ENCODE measurements at regions of chr14 and their contacts with region 1.

Region 1: GRCh38 chr14:73049428-73049827 is 8.9 kb upstream of the RBM25 start:
- DNase-seq: no peak
- ATAC-seq: no peak
- H3K4me3 ChIP-seq: no peak overlapping the region
- H3K27ac ChIP-seq: no peak overlapping the region
- H3K4me1 ChIP-seq: no peaks in the 10 kb centered on the region
- H3K27me3 ChIP-seq: no peaks in the 10 kb centered on the region
- CTCF ChIP-seq: no peak
- POLR2A ChIP-seq: no peak
- RAD21 ChIP-seq: no peak

Region 2: GRCh38 chr14:73472185-73473114 is 423.0 kb after region 1 on chr14:
- CTCF ChIA-PET with region 1: interaction called, 3 read pairs
- POLR2A ChIA-PET with region 1: no interaction called
- RAD21 ChIA-PET with region 1: no interaction called
- intact Hi-C with region 1: loop called (anchors 5 kb)
- DNase-seq: peak; percentile 60
- ATAC-seq: peak; percentile 89
- H3K4me3 ChIP-seq: no peak overlapping the region
- H3K27ac ChIP-seq: no peak overlapping the region
- H3K4me1 ChIP-seq: no peaks in the 10 kb centered on the region
- H3K27me3 ChIP-seq: no peaks in the 10 kb centered on the region
- CTCF ChIP-seq: peak; percentile 54 to 78 (median 75)
- POLR2A ChIP-seq: no peak
- RAD21 ChIP-seq: peak; percentile 93

Region 3: GRCh38 chr14:73728717-73729330 is 679.4 kb after region 1 on chr14:
- CTCF ChIA-PET with region 1: no interaction called
- POLR2A ChIA-PET with region 1: no interaction called
- RAD21 ChIA-PET with region 1: no interaction called
- intact Hi-C with region 1: no loop called
- DNase-seq: peak; percentile 61
- ATAC-seq: peak; percentile 93
- H3K4me3 ChIP-seq: no peak overlapping the region
- H3K27ac ChIP-seq: 0 out of 2 replicates have a peak overlapping the region, but pooled peaks have one; percentile 1
- H3K4me1 ChIP-seq: peaks cover 3 to 21% of the 10 kb centered on the region in 2 experiments; a peak in 3 of 4 replicates
- H3K27me3 ChIP-seq: no peaks in the 10 kb centered on the region
- CTCF ChIP-seq: peak; percentile 78 to 93 (median 91)
- POLR2A ChIP-seq: no peak
- RAD21 ChIP-seq: peak; percentile 98